Activated CD4-positive, alpha-beta T cell treated with anti-CD3 and anti-CD28 coated beads, Interleukin-2, amount 10 ng/mL, durations not matched to agents 7 days and 5 days (primary cell): ENCODE measurements at regions of chr17 and their contacts with region 1.

Region 1: DNA sequence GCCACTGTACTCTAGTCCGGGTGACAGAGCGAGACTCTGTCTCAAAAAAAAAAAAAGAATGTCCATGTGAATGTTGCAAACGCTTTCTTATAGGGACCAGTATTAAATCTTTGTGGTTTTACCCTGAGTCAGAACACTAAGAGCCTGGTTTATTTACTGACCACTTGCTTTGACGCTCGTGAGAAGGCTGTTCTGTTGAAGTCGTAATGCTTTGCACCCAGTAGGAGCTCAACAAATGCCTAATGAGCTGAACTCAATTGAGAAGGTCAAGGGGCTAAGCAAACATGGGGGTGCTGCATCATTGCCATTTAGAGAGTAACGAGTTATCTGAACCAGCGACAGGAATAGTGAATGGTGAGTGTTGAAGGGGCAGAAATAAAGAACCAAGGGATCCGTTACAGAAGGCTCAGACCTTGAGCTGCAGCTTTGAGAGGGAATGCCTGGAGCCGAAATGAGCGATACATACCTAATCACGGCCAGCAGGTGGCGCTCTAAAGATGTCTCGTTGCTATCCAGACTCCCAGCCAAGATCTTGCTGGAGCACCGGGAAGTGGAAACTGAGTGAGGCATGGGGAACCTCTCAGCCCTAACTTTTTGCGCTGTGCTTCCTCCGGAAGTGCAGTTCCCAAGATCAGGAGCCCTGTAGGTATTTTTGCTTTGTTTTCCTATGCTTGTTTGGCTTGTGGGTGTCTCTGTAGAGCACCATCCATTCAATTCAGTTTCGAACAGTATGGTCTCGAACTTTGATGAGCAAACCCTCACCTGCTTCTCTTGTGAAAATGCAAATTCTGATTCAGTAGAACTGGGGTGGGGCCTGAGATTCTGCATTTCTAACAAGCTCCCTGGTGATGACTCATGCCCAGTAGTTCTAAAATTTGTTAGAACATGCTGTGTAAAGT is 12.6 kb upstream of the RNF222 start:
- DNase-seq: peak; percentile 83
- H3K4me3 Mint-ChIP-seq: no peak overlapping the region
- H3K27ac Mint-ChIP-seq: no peak overlapping the region
- H3K4me1 Mint-ChIP-seq: peaks cover 21% of the 10 kb centered on the region
- H3K27me3 Mint-ChIP-seq: peaks cover 23% of the 10 kb centered on the region

Region 2: DNA sequence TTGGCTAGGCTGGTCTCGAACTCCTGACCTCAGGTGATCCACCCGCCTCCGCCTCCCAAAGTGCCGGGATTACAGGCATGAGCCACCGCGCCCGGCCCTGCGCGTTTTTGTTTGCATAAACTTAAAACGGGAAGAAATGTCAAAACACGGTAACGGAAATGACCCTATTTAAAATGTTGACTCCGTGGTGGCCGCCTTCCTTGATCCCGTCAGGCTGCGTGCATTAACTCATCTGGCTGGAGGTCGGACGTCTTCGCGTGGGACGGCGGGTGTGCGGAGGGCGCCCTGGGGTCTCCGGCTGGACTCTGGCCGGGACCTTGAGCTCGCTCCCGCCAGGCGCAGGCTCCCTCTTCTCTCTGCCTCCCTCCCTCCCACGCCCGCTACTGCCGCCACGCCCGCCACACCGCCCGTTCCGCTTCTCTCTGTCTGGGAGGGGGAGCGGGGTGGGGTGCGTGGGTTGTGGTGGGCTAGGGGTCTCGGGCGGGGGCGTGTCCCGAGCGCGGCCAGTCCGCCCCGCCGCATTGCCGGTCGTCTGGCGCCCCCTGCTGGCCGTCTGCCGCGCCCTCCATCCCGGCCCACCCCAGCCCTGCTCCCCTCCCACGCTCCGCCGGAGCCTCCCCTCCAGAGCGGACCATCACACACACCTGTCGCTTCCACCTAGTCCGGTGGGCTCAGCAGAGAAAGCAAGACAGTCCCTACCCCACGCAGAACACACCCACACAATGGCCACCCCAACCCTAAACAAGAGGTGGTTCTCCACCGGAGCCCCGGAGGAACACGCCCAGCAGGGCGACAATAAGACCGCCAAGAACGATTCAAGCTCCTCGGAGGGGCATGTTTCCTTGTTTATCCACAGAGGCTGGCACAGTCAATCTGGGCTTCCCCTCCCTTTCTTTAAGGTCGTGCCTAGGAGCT is 335.6 kb after region 1 on chr17:
- CTCF ChIA-PET with region 1: interaction called, 10 read pairs
- POLR2A ChIA-PET with region 1: no interaction called
- DNase-seq: peak; percentile 72
- H3K4me3 Mint-ChIP-seq: peak overlapping the region; percentile 82
- H3K27ac Mint-ChIP-seq: peak overlapping the region; percentile 96
- H3K4me1 Mint-ChIP-seq: peaks cover 17% of the 10 kb centered on the region
- H3K27me3 Mint-ChIP-seq: peaks cover 14% of the 10 kb centered on the region